H1 (cell line): ENCODE measurements at regions of chr9 and their contacts with region 1.

Region 1: DNA sequence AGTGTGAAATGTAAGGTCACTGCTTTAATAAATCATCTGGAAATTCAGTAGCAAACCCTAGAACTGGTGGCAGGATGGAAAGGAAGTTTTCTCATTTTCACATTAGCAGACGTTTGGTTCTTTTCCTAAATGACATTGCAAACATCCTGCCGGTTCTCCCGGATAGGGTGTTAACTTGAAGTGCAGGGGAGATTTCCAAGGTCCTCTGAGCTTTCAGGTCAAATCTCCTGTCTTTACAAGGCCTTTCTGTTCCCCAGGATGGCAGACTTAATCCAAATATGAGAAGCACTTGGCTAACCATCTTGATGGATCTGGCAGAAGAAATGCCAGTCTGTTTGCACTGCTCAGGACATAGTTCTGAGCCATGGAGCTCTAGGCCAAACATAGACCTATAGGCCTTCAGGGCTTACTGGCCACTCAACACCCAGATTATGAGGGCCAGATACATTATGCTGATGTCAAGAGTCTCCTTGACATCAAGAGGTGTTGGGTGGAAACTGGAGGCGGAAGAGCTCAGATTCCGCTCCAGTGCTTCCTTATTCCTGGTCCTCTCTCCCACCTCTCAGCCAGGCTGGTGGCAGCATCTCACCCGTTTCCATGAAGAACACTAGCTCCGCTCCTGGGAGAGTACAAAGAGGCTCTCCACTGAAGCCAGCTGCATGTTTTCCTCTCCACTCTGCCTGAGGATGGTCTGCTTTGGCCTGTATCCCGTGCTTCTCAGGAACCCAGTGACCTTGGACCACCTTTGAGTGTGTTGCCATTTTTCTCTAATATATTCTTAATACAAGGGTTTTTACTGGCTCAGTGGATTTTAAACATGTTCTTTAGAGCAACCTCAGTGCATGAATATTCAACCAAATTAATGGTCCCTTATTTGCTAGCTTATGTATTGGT is 61.0 kb downstream of the RALGPS1 start:
- DNase-seq: no peak
- H3K4me3 ChIP-seq: no peak overlapping the region
- H3K27ac ChIP-seq: no peak overlapping the region
- H3K4me1 ChIP-seq: peaks cover 0 to 3% (median 0%) of the 10 kb centered on the region in 4 experiments; a peak in 1 of 7 replicates
- H3K27me3 ChIP-seq: no peaks in the 10 kb centered on the region
- CTCF ChIP-seq: no peak
- EP300 ChIP-seq: no peak
- POLR2A ChIP-seq: no peak
- RAD21 ChIP-seq: no peak

Region 2: DNA sequence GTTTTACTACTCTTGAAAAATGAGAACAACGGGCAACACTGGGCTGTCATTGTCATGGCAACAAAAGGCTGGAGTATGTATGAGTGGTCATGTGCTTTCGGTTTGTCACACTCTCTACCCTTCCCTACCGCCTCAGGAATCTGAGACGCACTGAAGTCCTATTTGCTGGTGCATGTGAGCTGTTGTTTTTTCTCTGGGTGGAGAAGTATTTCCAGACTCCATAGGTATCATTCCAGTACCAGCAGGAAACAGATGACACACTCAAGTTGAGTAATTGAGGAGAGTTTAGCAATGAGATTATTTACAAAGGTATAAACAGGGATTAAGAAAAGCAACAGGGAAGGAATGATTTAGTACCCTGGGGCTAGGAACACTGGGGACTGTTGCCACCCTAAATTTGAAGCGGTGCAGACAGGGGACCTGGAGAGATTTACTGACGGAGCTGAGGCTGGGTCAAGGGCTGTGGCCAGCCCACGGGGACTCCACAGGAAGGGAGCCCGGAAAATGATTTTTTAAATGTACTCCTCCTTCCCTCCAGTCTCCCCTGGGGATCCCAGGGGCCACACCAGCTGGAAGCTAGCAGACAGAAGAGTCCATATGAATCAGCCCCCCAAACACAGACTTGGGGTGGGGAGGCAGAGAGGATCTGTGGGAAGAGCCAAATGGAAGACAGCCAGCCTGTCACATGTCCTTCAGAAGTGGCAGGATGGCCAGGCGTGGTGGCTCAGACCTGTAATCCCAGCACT is 184.0 kb before region 1 on chr9:
- CTCF ChIA-PET with region 1: no interaction called
- POLR2A ChIA-PET with region 1: no interaction called
- DNase-seq: no peak
- H3K4me3 ChIP-seq: no peak overlapping the region
- H3K27ac ChIP-seq: no peak overlapping the region
- H3K4me1 ChIP-seq: peaks cover 0 to 2% (median 0%) of the 10 kb centered on the region in 4 experiments; a peak in 3 of 7 replicates
- H3K27me3 ChIP-seq: 0 out of 7 replicates have a peak, but pooled peaks cover 0 to 3% (median 0%) of the 10 kb centered on the region in 4 experiments
- CTCF ChIP-seq: no peak
- EP300 ChIP-seq: no peak
- POLR2A ChIP-seq: no peak
- RAD21 ChIP-seq: no peak

Region 3: GRCh38 chr9:126985870-126986498 is 10.4 kb after region 1 on chr9:
- CTCF ChIA-PET with region 1: interaction called, 10 read pairs
- POLR2A ChIA-PET with region 1: interaction called, 3 read pairs
- DNase-seq: no peak
- H3K4me3 ChIP-seq: no peak overlapping the region
- H3K27ac ChIP-seq: no peak overlapping the region
- H3K4me1 ChIP-seq: no peaks in the 10 kb centered on the region
- H3K27me3 ChIP-seq: no peaks in the 10 kb centered on the region
- CTCF ChIP-seq: no peak
- EP300 ChIP-seq: no peak
- POLR2A ChIP-seq: no peak
- RAD21 ChIP-seq: no peak

Region 4: DNA sequence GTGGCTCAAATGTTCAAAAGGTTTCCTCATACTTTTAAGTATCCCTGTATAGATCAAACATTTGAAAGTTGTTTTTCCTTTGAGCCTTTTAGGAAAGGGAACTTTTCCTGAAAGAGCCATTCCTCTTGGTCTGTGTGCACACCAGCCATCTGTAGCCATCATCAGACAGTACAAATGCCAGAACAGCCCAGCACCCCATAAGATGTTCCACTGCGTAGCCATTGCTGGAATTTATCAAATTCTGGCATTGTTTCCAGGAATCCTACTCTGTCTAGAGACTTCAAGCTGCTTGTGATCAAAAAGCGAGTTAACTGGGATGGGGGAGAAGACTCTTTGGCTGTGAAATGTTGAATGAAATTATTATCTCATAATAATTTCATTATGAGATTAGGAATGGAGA is 38.6 kb after region 1 on chr9:
- CTCF ChIA-PET with region 1: no interaction called
- POLR2A ChIA-PET with region 1: no interaction called
- DNase-seq: no peak
- H3K4me3 ChIP-seq: no peak overlapping the region
- H3K27ac ChIP-seq: no peak overlapping the region
- H3K4me1 ChIP-seq: peaks cover 0 to 5% (median 1%) of the 10 kb centered on the region in 4 experiments; a peak in 2 of 7 replicates
- H3K27me3 ChIP-seq: no peaks in the 10 kb centered on the region
- CTCF ChIP-seq: no peak
- EP300 ChIP-seq: no peak
- POLR2A ChIP-seq: no peak
- RAD21 ChIP-seq: no peak

Region 5: GRCh38 chr9:127035951-127036350 is 60.4 kb after region 1 on chr9:
- CTCF ChIA-PET with region 1: no interaction called
- POLR2A ChIA-PET with region 1: no interaction called
- DNase-seq: no peak
- H3K4me3 ChIP-seq: no peak overlapping the region
- H3K27ac ChIP-seq: no peak overlapping the region
- H3K4me1 ChIP-seq: no peaks in the 10 kb centered on the region
- H3K27me3 ChIP-seq: no peaks in the 10 kb centered on the region
- CTCF ChIP-seq: no peak
- EP300 ChIP-seq: no peak
- POLR2A ChIP-seq: no peak
- RAD21 ChIP-seq: no peak

Region 6: DNA sequence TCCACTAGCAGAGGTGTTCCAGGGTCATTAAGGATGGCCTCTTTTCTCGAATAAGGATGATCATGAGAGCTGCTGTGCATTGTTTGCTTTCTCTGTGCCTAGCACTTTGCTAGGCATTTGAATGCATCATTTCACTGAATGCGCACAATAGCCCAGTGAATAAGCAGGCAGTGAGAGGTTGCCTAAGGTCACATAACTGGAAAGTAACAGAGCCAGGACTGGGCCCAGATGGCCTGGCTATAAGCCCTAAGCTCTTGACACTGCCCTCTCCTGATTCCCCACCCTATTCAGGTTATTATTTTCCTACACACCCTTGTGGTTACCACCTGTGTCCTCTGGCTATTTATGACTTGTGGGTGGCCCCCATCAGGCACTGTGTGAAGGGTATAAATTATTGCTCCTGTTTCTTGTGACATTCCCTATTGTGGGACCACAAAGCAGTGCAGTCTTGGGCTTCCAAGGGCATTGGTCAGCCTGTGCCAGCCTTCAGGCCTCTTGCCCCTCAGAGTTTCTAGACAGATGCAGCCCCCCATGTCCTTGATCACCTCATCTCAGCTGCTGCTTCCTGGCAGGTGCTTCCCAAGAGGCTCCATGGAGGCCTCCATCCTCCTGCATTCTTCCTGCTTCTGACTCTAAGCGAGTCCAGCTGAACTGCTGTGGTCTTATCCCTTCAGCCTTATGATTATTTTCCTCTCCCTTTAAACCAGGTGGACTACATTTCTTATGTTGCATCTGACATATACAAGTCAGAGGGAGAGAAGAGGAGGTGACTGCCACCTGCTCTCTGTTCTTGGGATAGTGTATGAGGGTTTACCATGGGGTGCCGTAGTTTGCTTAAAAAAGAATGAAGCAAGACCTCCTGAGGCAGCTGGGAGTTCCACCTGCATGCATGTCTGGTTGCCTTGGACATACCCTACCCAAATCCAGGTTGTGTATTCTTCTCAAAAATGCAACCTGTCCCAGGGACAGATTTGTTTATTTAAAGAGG is 99.3 kb after region 1 on chr9:
- CTCF ChIA-PET with region 1: no interaction called
- POLR2A ChIA-PET with region 1: no interaction called
- DNase-seq: no peak
- H3K4me3 ChIP-seq: 0 out of 8 replicates have a peak overlapping the region, but pooled peaks of 1 of the 4 experiments have one; percentile 21
- H3K27ac ChIP-seq: no peak overlapping the region
- H3K4me1 ChIP-seq: peaks cover 18 to 30% (median 23%) of the 10 kb centered on the region in 4 experiments
- H3K27me3 ChIP-seq: no peaks in the 10 kb centered on the region; a peak in 1 of 7 replicates
- CTCF ChIP-seq: no peak
- EP300 ChIP-seq: no peak
- POLR2A ChIP-seq: no peak
- RAD21 ChIP-seq: no peak